ENCODE measurements at regions of chr12 and their contacts with region 1.

Region 1: DNA sequence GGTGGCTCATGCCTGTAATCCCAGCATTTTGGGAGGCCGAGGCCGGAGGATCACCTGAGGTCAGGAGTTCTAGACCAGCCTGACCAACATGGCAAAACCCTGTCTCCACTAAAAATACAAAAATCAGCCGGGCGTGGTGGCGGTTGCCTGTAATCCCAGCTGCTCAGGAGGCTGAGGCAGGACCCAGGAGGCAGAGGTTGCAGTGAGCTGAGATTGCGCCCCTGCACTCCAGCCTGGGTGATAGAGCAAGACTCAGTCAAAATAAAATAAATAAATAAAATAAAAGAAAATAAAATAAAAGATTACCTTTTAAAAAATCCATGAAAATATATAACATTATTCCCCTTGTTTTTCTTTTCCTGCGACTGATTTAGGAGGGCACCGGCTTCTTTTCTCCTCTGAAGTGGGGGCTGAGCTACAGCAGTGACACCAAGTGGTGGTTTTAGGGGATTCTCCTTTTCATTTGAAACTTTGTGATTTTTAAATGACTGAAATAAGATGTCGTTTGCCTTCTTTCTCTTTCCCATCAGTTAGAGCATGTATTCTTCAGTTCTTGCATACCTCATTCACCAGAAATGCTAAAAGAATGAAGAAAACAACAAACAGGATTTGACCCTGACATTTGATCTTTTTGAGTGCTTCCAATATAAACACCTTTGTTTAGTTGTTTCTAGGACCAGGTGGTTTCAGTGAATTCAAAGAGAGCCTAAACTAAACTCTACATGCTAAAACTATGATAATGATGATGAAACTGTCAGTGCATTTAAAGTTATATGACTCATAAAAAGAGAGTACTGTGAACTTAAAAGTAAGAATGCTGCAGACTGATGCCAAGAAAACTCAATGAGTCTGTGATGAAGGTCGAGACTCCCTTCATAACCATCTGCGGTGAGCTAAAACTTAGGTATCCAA is 22.6 kb upstream of the PKP2 start:
- DNase-seq: no peak
- H3K4me3 ChIP-seq: no peak overlapping the region
- H3K27ac ChIP-seq: no peak overlapping the region
- H3K4me1 ChIP-seq: no peaks in the 10 kb centered on the region
- H3K27me3 ChIP-seq: no peaks in the 10 kb centered on the region
- CTCF ChIP-seq: peak; percentile 7 to 65 (median 55)
- EP300 ChIP-seq: no peak
- POLR2A ChIP-seq: no peak
- RAD21 ChIP-seq: peak; percentile 85 to 87

Region 2: DNA sequence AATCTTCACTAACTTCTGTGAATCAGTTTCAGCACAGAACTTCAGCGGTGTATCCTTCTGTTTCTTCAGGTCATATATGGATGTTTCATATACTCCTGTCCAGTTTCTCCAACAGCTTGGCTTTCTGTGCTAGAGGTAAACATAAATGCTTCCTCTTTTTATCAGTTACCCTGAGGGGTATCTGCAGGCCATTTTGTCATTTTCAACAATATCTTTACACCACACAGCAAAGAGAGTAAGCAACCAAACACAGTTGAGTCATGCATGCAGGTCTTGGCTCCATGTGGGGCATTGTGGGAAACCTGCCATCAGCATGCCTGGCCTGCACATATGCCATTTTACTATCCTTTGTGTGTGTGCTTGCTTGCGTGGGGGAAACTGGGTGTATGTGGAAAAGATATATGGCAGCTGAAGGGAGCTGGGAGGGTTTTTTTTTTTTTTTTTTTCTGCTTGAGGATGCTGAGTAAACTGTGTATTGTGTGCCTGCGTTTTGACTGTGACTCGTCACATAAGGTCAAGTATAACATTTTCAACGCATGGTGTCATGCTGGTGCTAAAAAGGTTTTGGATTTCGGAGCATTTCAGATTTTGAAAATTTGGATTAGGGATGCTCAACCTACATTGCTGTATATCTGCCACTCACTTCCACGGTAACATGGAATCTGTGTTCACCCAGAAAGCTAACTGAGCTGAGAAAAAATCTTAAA is 107.3 kb before region 1 on chr12:
- CTCF ChIA-PET with region 1: no interaction called
- POLR2A ChIA-PET with region 1: no interaction called
- DNase-seq: no peak
- H3K4me3 ChIP-seq: no peak overlapping the region
- H3K27ac ChIP-seq: no peak overlapping the region
- H3K4me1 ChIP-seq: no peaks in the 10 kb centered on the region
- H3K27me3 ChIP-seq: no peaks in the 10 kb centered on the region
- CTCF ChIP-seq: no peak
- EP300 ChIP-seq: no peak
- POLR2A ChIP-seq: no peak
- RAD21 ChIP-seq: no peak

Region 3: DNA sequence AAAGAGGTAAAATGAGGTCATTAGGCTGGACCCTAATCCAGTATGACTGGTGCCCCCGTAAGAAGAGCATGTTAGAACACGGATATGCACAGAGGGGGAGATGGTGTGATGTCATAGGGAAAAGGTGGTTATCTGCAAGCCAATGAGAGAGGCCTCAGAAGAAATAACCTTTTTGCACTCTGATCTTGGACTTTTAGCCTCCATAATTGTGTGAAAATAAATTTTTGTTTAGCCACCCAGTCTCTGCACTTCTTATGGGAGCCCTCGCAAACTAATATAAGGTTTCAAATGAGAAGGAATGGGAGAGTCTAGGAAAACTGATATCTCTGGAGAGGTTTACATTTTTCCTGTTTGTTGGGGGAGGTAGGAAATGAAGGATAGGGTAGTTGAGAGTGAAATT is 20.7 kb after region 1 on chr12:
- CTCF ChIA-PET with region 1: interaction called, 11 read pairs
- POLR2A ChIA-PET with region 1: no interaction called
- DNase-seq: no peak
- H3K4me3 ChIP-seq: no peak overlapping the region
- H3K27ac ChIP-seq: no peak overlapping the region
- H3K4me1 ChIP-seq: no peaks in the 10 kb centered on the region
- H3K27me3 ChIP-seq: no peaks in the 10 kb centered on the region
- CTCF ChIP-seq: no peak
- EP300 ChIP-seq: no peak
- POLR2A ChIP-seq: no peak
- RAD21 ChIP-seq: no peak

Measured in H1 (cell line).